ENCODE measurements at regions of chr3 and their contacts with region 1.

Region 1: DNA sequence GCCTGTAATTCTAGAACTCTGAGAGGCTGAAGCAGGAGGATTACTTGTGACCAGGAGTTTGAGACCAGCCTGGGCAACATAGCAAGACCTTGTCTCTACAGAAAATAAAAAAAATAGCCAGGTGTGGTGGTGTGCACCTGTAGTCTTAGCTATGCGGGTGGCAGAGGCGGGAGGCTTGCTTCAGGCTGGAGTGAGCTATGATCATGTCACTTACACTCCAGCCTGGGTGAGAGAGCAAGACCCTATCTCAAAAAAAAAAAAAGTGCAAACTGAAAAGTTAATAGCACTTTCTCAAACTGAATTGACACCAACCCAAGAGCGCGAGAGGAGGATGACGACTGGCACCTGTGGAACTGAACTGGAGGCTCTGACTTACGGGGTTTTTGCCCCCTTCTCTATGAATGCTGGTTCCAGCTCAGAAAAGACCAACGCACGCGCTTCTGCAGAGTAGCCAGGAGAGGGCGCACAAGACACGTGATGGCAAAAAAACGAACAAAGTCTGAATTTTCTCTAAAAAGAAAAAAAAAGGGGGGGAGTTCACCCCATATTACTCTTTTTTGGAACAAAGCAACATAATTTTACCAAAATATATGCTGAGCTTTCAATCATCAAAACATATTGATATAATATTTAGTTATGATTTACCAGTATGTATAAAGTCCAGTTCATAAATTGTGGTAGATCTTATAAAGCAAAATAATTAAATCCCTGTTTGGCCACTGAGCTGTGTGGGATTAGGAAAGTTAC is 23.7 kb downstream of the CFAP92 start:
- DNase-seq: peak; percentile 37
- ATAC-seq: peak; percentile 72
- H3K4me3 ChIP-seq: no peak overlapping the region
- H3K27ac ChIP-seq: no peak overlapping the region
- H3K4me1 ChIP-seq: peaks cover 2% of the 10 kb centered on the region; the same call in 1 of the 2 replicates
- H3K27me3 ChIP-seq: peaks cover 22% of the 10 kb centered on the region
- CTCF ChIP-seq: peak; percentile 91
- POLR2A ChIP-seq: no peak
- RAD21 ChIP-seq: peak; percentile 88

Region 2: DNA sequence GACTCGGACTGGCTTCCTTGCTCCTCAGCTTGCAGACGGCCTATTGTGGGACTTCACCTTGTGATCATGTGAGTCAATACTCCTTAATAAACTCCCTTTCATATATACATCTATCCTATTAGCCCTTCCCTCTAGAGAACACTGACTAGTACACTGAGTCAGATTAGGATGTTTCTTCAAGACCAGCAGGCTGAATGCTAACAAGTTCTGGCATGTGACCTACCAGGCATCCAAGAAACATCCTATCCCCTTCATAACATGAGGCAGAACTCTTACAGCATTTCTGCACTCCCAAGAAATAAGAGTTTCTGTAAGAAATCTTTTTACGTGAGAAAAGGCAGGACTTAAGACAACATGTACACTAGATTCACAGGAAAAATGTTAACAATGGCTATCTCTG is 14.4 kb after region 1 on chr3:
- CTCF ChIA-PET with region 1: interaction called, 12 read pairs
- POLR2A ChIA-PET with region 1: no interaction called
- dilution Hi-C with region 1: no loop called
- in situ Hi-C with region 1: no loop called
- intact Hi-C with region 1: no loop called
- DNase-seq: peak; percentile 73
- ATAC-seq: peak; percentile 96
- H3K4me3 ChIP-seq: no peak overlapping the region
- H3K27ac ChIP-seq: no peak overlapping the region; the same call in 1 of the 2 replicates
- H3K4me1 ChIP-seq: peaks cover 3% of the 10 kb centered on the region; the same call in 1 of the 2 replicates
- H3K27me3 ChIP-seq: peaks cover 23% of the 10 kb centered on the region
- CTCF ChIP-seq: no peak
- POLR2A ChIP-seq: no peak
- RAD21 ChIP-seq: no peak

Region 3: DNA sequence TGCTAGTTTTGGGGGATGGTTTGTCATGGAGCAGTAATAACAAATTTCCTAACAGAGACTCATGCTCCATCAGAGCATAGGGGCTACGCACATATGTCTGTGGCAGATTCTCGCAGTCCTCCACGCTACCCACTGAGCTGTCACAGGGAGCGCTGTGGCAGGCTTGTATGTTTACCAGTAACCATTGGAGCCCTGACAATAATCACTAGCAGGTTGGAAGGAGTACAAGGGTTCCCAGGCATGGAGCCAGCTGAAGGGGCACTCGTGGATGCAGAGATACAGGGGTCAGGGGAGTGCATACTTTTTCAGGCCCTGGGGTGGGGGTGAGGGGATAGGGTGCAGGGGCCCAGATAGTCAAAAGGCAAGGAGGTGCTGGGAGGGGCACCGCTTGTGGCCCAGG is 82.5 kb after region 1 on chr3:
- CTCF ChIA-PET with region 1: interaction called, 21 read pairs
- POLR2A ChIA-PET with region 1: no interaction called
- dilution Hi-C with region 1: no loop called
- in situ Hi-C with region 1: no loop called
- intact Hi-C with region 1: loop called (anchors 1 kb)
- DNase-seq: no peak
- ATAC-seq: no peak
- H3K4me3 ChIP-seq: no peak overlapping the region
- H3K27ac ChIP-seq: no peak overlapping the region
- H3K4me1 ChIP-seq: no peaks in the 10 kb centered on the region
- H3K27me3 ChIP-seq: peaks cover 15% of the 10 kb centered on the region
- CTCF ChIP-seq: no peak
- POLR2A ChIP-seq: no peak
- RAD21 ChIP-seq: no peak

Region 4: DNA sequence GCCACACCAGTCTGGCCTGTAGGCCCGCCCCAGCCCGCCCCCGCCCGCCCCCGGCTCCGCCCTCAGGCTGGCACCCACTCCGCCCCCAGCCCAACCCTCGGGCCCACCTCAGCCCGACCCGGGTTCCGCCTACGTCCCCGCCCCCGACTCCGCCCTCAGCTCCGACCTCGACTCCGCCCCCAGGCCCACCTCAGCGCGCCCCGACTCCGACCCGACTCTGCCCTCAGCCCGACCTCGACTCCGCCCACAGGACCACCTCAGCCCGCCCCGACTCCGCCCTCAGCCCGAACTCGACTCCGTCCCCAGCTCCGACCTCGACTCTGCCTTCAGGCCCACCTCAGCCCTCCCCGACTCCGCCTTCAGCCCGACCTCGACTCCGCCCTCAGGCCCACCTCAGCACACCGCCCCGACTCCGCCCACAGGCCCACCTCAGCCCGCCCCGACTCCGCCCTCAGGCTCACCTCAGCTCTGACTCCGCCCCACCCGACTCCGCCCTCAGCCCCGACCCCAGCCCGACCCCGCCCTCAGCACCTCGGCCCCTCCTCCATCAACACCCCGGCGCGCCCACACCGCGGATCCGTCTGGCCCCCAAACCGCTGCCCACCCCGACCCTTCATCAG is 151.7 kb after region 1 on chr3 and contains the start of gene RAB43:
- CTCF ChIA-PET with region 1: interaction called, 5 read pairs
- POLR2A ChIA-PET with region 1: no interaction called
- dilution Hi-C with region 1: no loop called
- in situ Hi-C with region 1: no loop called
- intact Hi-C with region 1: loop called (anchors 1 kb)
- DNase-seq: peak; percentile 56
- ATAC-seq: peak; percentile 78
- H3K4me3 ChIP-seq: peak within 1 kb of the TSS; percentile 62
- H3K27ac ChIP-seq: peak within 1 kb of the TSS; percentile 75
- H3K4me1 ChIP-seq: peaks cover 21% of the 10 kb centered on the region
- H3K27me3 ChIP-seq: no peaks in the 10 kb centered on the region
- CTCF ChIP-seq: no peak
- POLR2A ChIP-seq: no peak
- RAD21 ChIP-seq: no peak
- total RNA-seq, gene RAB43: 9.2 and 9.9 TPM in 2 replicates

Region 5: DNA sequence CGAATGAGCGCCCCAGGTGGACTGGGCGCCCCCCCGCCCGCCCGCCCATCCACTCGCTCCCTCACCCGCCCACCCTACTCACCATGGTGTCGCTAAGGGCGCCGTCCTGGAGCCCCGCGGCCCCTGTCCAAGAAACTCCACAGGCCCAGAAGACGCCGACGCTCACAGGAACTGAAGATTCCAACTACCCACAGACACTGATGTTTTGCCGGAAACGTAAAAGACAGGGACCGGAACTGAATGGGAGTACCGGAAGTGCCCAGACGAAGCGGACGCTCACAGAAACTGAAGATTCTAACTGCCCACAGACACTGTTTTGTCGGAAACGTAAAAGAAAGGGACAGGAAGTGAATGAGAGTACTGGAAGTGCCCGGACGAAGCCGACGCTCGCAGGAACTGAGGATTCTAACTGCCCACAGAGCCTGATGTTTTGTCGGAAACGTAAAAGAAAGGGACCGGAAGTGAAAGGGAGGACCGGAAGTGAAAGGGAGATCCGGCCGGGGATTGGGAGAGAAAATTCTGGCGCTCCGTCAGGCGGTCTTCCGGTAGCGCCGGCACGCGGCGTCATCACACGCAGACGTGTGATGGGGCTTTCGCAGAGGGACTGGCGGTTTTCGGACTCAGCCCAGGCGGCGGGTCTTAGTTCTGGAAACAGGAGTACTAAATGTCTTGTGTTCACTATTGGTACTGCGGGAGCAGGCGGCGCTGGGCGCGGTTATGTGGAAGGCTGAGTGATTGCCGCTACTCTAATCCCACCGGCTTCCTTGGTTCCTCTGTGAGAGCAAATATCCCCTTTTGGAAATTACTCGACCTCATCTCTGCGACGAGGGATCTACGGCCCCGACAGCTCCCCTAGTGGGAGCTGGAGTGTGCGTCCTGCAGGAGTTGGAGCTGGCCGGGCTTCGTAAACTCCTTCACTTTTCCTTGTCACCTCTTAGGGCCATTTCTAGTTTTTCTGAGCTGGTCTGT is 191.0 kb after region 1 on chr3 and contains the start of gene ISY1:
- CTCF ChIA-PET with region 1: interaction called, 4 read pairs
- POLR2A ChIA-PET with region 1: no interaction called
- dilution Hi-C with region 1: no loop called
- in situ Hi-C with region 1: no loop called
- intact Hi-C with region 1: loop called (anchors 1 kb)
- DNase-seq: peak; percentile 97
- ATAC-seq: peak; percentile 87
- H3K4me3 ChIP-seq: peak within 1 kb of the TSS; percentile 67
- H3K27ac ChIP-seq: peak within 1 kb of the TSS; percentile 92
- H3K4me1 ChIP-seq: peaks cover 2% of the 10 kb centered on the region
- H3K27me3 ChIP-seq: no peaks in the 10 kb centered on the region
- CTCF ChIP-seq: peak; percentile 87
- POLR2A ChIP-seq: peak; percentile 95
- RAD21 ChIP-seq: peak; percentile 56
- total RNA-seq, gene ISY1: 28.5 and 39.7 TPM in 2 replicates

Measured in IMR-90 (cell line).